ENCODE measurements at regions of chr6 and their contacts with region 1.

Region 1: GRCh38 chr6:93721385-93722048 is 302.2 kb upstream of the EPHA7 start:
- DNase-seq: peak; percentile 28
- ATAC-seq: peak; percentile 63
- H3K4me3 ChIP-seq: no peak overlapping the region
- H3K27ac ChIP-seq: no peak overlapping the region
- H3K4me1 ChIP-seq: no peaks in the 10 kb centered on the region; the same call in 1 of the 2 replicates
- H3K27me3 ChIP-seq: no peaks in the 10 kb centered on the region
- CTCF ChIP-seq: peak; percentile 56

Region 2: DNA sequence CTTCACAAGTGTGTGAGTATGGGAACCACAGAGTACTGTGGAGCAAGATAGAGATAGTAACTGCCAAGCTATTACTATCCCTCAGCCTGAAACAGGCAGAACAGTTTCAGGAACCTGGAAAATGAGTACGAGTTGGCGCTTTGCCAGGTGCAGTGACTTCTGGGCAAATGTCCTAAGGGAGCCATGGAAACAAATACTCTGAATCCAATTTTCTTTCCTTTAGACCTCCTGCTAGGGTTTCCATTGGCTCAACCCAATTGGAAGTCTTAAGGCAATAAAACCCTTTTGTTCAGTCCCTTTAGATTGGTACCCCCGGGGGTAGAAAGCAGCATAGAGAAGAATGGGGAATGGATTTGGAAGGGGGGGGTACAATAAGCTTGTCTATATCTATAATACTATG is 97.1 kb before region 1 on chr6:
- CTCF ChIA-PET with region 1: no interaction called
- POLR2A ChIA-PET with region 1: no interaction called
- intact Hi-C with region 1: no loop called
- DNase-seq: no peak
- ATAC-seq: no peak
- H3K4me3 ChIP-seq: no peak overlapping the region
- H3K27ac ChIP-seq: no peak overlapping the region
- H3K4me1 ChIP-seq: no peaks in the 10 kb centered on the region
- H3K27me3 ChIP-seq: no peaks in the 10 kb centered on the region
- CTCF ChIP-seq: no peak

Region 3: DNA sequence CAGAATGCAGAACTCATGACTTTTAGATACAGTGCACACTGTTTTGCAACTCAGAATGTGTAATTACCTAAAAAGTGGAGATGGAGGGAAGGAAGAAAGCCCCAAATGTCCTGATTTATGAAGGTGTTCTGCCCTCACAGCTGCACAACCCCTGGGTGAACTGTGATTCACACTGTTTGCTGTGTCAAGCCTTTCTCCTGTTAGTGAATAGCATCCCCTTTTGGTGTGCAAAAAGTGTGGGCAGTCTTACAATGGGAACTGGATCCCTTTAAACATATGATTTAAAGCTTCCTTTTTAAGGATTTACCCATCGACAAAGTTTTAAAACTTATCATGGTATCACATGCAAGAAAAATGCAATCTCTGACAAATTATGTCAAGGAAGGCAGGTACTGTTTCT is 331.2 kb after region 1 on chr6:
- CTCF ChIA-PET with region 1: no interaction called
- POLR2A ChIA-PET with region 1: no interaction called
- intact Hi-C with region 1: loop called (anchors 5 kb)
- DNase-seq: peak; percentile 13
- ATAC-seq: peak; percentile 76
- H3K4me3 ChIP-seq: no peak overlapping the region
- H3K27ac ChIP-seq: no peak overlapping the region
- H3K4me1 ChIP-seq: no peaks in the 10 kb centered on the region
- H3K27me3 ChIP-seq: no peaks in the 10 kb centered on the region
- CTCF ChIP-seq: peak; percentile 38

Measured in PC-3 (cell line).